GM12878 (cell line): ENCODE measurements at regions of chr12 and their contacts with region 1.

Region 1: DNA sequence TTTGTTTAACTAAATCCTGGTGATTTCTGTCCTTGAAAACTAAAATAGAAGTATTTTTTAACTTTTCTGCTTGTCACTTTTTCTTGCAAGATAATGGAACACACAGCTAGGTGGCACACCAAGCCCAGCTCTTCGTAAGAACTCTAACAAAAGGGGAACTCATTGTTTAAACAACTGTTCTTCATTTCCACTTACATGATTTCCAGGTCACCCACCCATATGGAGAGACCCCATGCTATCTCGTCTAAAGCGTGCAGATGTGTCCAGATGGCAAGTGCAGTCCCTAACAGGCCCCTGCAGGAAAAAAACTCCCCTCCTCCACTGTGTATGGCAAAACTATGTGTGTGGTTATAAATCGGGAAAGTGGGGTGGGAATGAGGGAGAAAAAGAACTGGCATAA is 43.3 kb upstream of the NT5DC3 start:
- DNase-seq: no peak
- ATAC-seq: peak; percentile 20
- H3K4me3 ChIP-seq: no peak overlapping the region
- H3K27ac ChIP-seq: no peak overlapping the region
- H3K4me1 ChIP-seq: peaks cover 29% of the 10 kb centered on the region
- H3K27me3 ChIP-seq: no peaks in the 10 kb centered on the region
- CTCF ChIP-seq: peak; percentile 41 to 74 (median 63); a peak in 5 of 6 replicates
- EP300 ChIP-seq: no peak
- POLR2A ChIP-seq: no peak
- RAD21 ChIP-seq: peak; percentile 97

Region 2: GRCh38 chr12:103596981-103597380 is 287.3 kb before region 1 on chr12:
- CTCF ChIA-PET with region 1: no interaction called
- POLR2A ChIA-PET with region 1: no interaction called
- RAD21 ChIA-PET with region 1: no interaction called
- SMC1A ChIA-PET with region 1: no interaction called
- in situ Hi-C with region 1: no loop called
- intact Hi-C with region 1: no loop called
- DNase-seq: no peak
- ATAC-seq: no peak
- H3K4me3 ChIP-seq: no peak overlapping the region
- H3K27ac ChIP-seq: no peak overlapping the region
- H3K4me1 ChIP-seq: no peaks in the 10 kb centered on the region
- H3K27me3 ChIP-seq: no peaks in the 10 kb centered on the region
- CTCF ChIP-seq: no peak
- EP300 ChIP-seq: no peak
- POLR2A ChIP-seq: no peak
- RAD21 ChIP-seq: no peak

Region 3: DNA sequence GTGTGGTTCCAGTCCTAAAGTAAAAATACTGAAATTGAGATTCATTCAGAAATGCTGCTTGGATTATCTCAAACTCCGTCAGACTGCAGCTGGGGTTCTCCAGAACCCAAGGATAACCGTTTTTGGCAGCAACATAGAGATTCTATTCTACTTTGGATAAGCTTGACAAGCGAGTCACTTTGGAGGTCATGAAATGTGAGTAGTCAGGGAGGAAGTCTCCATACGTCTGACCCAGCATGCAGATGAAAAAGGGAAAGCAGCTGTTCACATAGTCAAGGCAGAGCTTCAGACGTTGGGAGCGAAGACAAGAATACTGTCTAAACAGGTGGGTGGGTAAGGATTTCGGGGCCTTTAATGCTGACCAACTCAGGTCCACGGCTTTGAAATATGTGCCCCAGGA is 31.0 kb after region 1 on chr12:
- CTCF ChIA-PET with region 1: interaction called, 10 read pairs
- POLR2A ChIA-PET with region 1: interaction called, 9 read pairs
- RAD21 ChIA-PET with region 1: interaction called, 3 read pairs
- SMC1A ChIA-PET with region 1: interaction called, 9 read pairs
- in situ Hi-C with region 1: no loop called
- intact Hi-C with region 1: no loop called
- DNase-seq: no peak
- ATAC-seq: no peak
- H3K4me3 ChIP-seq: no peak overlapping the region
- H3K27ac ChIP-seq: no peak overlapping the region
- H3K4me1 ChIP-seq: no peaks in the 10 kb centered on the region
- H3K27me3 ChIP-seq: no peaks in the 10 kb centered on the region
- CTCF ChIP-seq: no peak
- EP300 ChIP-seq: no peak
- POLR2A ChIP-seq: no peak
- RAD21 ChIP-seq: no peak

Region 4: GRCh38 chr12:103930034-103930786 is 45.9 kb after region 1 on chr12 and contains the start of gene HSP90B1:
- CTCF ChIA-PET with region 1: interaction called, 21 read pairs
- POLR2A ChIA-PET with region 1: interaction called, 73 read pairs
- RAD21 ChIA-PET with region 1: interaction called, 121 read pairs
- SMC1A ChIA-PET with region 1: interaction called, 125 read pairs
- in situ Hi-C with region 1: no loop called
- intact Hi-C with region 1: loop called (anchors 2 kb)
- DNase-seq: peak; percentile 99
- ATAC-seq: peak; percentile 72
- H3K4me3 ChIP-seq: peak within 1 kb of the TSS; percentile 93
- H3K27ac ChIP-seq: peak within 1 kb of the TSS; percentile 99
- H3K4me1 ChIP-seq: peaks cover 21% of the 10 kb centered on the region
- H3K27me3 ChIP-seq: no peaks in the 10 kb centered on the region
- CTCF ChIP-seq: no peak
- EP300 ChIP-seq: peak; percentile 40 to 67; a peak in 3 of 4 replicates
- POLR2A ChIP-seq: peak; percentile 98
- RAD21 ChIP-seq: no peak
- polyA plus RNA-seq, gene HSP90B1: 254 to 414 TPM

Region 5: DNA sequence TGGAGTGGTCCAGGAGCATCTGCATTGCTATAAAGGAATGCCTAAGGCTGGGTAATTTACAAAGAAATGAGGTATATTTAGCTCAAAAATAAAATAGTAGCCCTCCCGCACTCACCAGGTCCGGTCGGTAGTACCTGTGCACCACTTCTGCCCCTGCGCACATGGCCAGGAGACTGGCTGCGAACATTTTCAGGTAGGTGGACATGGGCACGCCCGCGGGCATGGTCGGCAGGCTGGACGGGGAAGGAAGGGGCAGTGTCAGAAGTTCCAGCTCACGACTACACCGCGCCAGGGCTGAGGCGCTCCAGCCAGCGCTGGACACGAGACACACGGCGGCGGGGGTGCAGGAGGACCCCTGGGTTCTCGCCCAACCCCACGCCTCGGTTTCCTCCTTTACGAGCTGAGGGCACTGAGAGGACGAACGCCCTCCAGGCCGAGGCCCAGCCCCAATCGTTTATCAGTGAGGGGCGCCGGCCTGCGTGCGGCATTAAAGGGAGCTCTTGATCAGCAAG is 72.3 kb after region 1 on chr12:
- CTCF ChIA-PET with region 1: interaction called, 17 read pairs
- POLR2A ChIA-PET with region 1: no interaction called
- RAD21 ChIA-PET with region 1: interaction called, 3 read pairs
- SMC1A ChIA-PET with region 1: interaction called, 13 read pairs
- in situ Hi-C with region 1: no loop called
- intact Hi-C with region 1: no loop called
- DNase-seq: no peak
- ATAC-seq: peak; percentile 31
- H3K4me3 ChIP-seq: peak overlapping the region; percentile 80
- H3K27ac ChIP-seq: peak overlapping the region; percentile 77
- H3K4me1 ChIP-seq: peaks cover 8% of the 10 kb centered on the region
- H3K27me3 ChIP-seq: no peaks in the 10 kb centered on the region
- CTCF ChIP-seq: no peak
- EP300 ChIP-seq: no peak
- POLR2A ChIP-seq: no peak
- RAD21 ChIP-seq: no peak

Region 6: GRCh38 chr12:104358347-104359003 is 474.2 kb after region 1 on chr12:
- CTCF ChIA-PET with region 1: interaction called, 3 read pairs
- POLR2A ChIA-PET with region 1: no interaction called
- RAD21 ChIA-PET with region 1: no interaction called
- SMC1A ChIA-PET with region 1: no interaction called
- in situ Hi-C with region 1: no loop called
- intact Hi-C with region 1: loop called (anchors 10 kb)
- DNase-seq: peak; percentile 44
- ATAC-seq: peak; percentile 96
- H3K4me3 ChIP-seq: no peak overlapping the region
- H3K27ac ChIP-seq: no peak overlapping the region
- H3K4me1 ChIP-seq: no peaks in the 10 kb centered on the region
- H3K27me3 ChIP-seq: no peaks in the 10 kb centered on the region
- CTCF ChIP-seq: peak; percentile 91 to 96 (median 92)
- EP300 ChIP-seq: no peak
- POLR2A ChIP-seq: no peak
- RAD21 ChIP-seq: peak; percentile 90